AG04449 (cell line): ENCODE measurements at regions of chr6 and their contacts with region 1.

Region 1: GRCh38 chr6:53544470-53545308 is at the start of gene GCLC:
- DNase-seq: peak; percentile 71
- H3K4me3 ChIP-seq: peak within 1 kb of the TSS; percentile 85
- CTCF ChIP-seq: peak; percentile 66

Region 2: GRCh38 chr6:53530346-53530745 is 14.3 kb before region 1 on chr6:
- CTCF ChIA-PET with region 1: interaction called, 11 read pairs
- POLR2A ChIA-PET with region 1: interaction called, 5 read pairs
- DNase-seq: no peak
- H3K4me3 ChIP-seq: no peak overlapping the region
- CTCF ChIP-seq: no peak